Dendritic cell treated with granulocyte-macrophage colony-stimulating factor and Interleukin-4, amounts not matched to agents 40 ng/mL and 50 ng/mL, for 4 days (primary cell): ENCODE measurements at regions of chr19 and their contacts with region 1.

Region 1: DNA sequence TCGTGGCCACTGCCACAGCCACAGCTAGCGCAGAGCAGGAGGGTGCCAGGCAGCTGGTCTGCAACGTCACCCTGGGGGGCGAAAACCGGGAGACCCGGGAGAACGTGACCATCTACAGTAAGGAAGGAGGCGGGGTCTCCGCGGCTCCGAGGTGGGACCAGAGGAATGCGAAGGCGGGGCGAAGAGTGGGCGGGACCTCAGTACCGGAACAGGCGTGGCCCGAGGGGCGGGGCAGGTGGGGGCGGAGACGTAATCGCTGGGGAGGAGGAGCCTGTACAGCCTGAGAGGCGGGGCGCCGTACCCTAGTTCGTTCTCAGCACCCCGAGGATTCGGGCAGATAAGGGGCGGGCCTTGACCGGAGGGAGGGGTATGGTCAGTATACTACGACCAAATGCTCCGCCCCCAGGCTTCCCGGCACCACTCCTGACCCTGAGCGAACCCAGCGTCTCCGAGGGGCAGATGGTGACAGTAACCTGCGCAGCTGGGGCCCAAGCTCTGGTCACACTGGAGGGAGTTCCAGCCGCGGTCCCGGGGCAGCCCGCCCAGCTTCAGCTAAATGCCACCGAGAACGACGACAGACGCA is 2.5 kb downstream of the ICAM5 start:
- H3K4me3 Mint-ChIP-seq: peak overlapping the region; percentile 73
- H3K27ac Mint-ChIP-seq: peak overlapping the region; percentile 67
- H3K4me1 Mint-ChIP-seq: peaks cover 85% of the 10 kb centered on the region
- H3K27me3 Mint-ChIP-seq: peaks cover 70% of the 10 kb centered on the region

Region 2: DNA sequence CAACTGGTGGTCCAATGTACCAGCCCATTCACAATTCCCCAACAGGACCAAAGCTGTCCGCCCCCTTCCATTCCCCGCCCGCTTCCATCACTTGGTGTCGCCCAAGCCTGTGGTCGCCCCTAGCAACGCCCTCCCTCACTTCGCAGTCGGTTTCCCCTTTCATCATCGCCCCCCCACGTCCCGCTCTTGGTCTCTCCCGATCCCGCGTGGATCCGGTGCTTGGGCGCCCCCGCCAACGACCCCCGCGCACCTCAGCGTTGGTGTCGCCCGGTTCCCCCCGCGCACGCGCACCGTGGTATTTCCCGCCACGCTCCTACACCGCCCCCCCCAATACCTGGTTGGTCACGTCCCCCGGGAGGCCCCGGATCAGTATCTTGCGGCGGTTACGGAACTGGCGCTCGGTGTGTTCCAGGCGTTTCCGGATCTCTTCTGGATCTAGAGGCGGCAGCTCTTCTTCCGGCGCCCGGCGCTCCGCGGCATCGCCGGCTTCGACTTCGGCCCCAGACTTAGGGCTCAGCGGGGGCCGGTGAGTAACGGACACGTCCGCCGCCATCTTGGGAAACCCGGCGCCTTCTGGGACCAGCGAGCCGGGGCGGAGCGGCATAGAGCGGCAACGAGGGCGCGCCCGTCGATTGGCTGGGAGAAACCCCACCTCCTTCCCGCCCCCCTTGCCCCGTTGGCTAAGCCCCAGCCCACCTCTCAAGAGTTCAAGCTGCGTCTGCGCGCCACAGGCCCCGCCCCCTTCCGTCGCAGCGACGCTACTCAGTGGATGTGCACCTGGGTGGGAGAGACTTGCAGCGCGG is 40.9 kb after region 1 on chr19 and contains the start of gene RAVER1:
- intact Hi-C with region 1: loop called (anchors 5 kb)
- H3K4me3 Mint-ChIP-seq: peak within 1 kb of the TSS; percentile 94
- H3K27ac Mint-ChIP-seq: peak within 1 kb of the TSS; percentile 92
- H3K4me1 Mint-ChIP-seq: peaks cover 44% of the 10 kb centered on the region
- H3K27me3 Mint-ChIP-seq: no peaks in the 10 kb centered on the region